ENCODE measurements at regions of chr16 and their contacts with region 1.

Region 1: DNA sequence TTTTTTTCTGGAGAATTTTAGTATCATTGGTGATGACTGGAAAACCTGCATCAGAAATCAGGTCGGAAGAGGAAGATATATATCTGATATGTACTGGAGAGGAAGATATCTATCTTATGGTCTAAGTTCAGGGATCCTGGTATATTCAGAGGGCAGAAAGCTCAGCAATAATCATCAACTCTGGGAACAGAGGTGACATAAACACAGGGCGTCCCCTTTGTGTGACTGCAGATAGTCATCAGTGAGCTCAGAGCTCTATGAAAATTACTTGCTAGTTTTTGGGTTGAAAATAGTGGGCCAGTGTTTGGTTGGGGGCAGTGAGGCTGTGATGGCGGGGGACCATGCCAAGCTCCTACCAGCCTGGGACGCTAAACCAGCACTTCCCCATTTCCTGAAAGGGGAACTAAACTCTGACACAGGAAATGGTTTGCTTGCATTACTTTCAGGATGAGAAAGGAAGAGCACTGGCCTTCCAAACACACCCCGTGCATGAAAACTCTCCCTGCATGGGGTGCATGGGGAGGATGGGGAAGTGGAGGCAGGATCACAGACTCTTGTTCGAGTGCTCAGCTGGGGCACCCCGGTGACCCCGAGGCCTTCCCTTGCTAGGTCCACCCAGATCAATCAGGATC is 15.8 kb downstream of the NOD2 start:
- DNase-seq: no peak
- H3K4me3 Mint-ChIP-seq: peak overlapping the region; percentile 11
- H3K27ac Mint-ChIP-seq: peak overlapping the region; percentile 64
- H3K4me1 Mint-ChIP-seq: peaks cover 54% of the 10 kb centered on the region
- H3K27me3 Mint-ChIP-seq: no peaks in the 10 kb centered on the region

Region 2: DNA sequence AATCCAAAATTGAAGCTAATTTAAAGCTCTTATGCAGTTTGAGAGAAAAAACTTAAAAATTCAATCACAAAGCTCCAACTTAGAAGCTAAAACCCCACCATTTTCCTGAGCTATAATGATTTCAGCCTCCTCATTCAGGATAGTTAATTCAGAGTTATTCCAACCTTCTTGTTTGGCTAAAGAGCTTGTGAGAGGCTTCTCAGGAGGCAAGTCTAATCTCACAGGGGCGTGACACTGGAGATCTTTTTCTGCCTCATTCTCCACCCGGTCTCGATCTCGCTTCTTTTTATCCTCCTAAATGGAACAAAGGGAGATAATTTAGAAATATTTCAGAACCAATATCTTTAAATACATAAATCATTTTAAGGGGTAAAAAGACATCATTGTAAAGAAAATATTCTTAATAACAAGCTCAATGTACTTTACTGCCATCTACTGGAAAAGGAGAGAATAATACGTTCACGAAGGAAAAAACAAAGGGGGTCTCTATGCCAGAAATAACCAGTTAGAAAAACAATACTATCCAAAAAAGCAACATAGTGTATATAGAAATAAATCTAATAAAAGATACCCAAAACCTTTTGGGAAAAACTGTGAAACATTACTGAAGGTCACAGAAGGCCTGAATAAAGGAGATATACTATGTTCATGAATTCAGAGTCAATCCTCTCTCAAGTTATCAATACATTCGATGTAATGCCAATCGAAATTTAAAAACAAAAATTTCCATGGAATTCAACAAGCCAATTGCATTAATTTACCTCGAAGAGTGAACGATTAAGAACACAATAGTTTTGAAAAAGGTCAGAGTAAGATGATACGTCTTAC is 354.3 kb before region 1 on chr16:
- intact Hi-C with region 1: no loop called
- DNase-seq: no peak
- H3K4me3 Mint-ChIP-seq: no peak overlapping the region
- H3K27ac Mint-ChIP-seq: peak overlapping the region; percentile 47
- H3K4me1 Mint-ChIP-seq: peaks cover 17% of the 10 kb centered on the region
- H3K27me3 Mint-ChIP-seq: no peaks in the 10 kb centered on the region

Region 3: GRCh38 chr16:50683689-50684374 is 25.3 kb before region 1 on chr16:
- intact Hi-C with region 1: loop called (anchors 2 kb)
- DNase-seq: peak; percentile 61
- H3K4me3 Mint-ChIP-seq: peak overlapping the region; percentile 45
- H3K27ac Mint-ChIP-seq: peak overlapping the region; percentile 86
- H3K4me1 Mint-ChIP-seq: peaks cover 58% of the 10 kb centered on the region
- H3K27me3 Mint-ChIP-seq: no peaks in the 10 kb centered on the region

Region 4: GRCh38 chr16:50697851-50698767 is 11.1 kb before region 1 on chr16:
- intact Hi-C with region 1: loop called (anchors 1 kb)
- DNase-seq: no peak
- H3K4me3 Mint-ChIP-seq: peak overlapping the region; percentile 70
- H3K27ac Mint-ChIP-seq: peak overlapping the region; percentile 88
- H3K4me1 Mint-ChIP-seq: peaks cover 63% of the 10 kb centered on the region
- H3K27me3 Mint-ChIP-seq: no peaks in the 10 kb centered on the region

Region 5: DNA sequence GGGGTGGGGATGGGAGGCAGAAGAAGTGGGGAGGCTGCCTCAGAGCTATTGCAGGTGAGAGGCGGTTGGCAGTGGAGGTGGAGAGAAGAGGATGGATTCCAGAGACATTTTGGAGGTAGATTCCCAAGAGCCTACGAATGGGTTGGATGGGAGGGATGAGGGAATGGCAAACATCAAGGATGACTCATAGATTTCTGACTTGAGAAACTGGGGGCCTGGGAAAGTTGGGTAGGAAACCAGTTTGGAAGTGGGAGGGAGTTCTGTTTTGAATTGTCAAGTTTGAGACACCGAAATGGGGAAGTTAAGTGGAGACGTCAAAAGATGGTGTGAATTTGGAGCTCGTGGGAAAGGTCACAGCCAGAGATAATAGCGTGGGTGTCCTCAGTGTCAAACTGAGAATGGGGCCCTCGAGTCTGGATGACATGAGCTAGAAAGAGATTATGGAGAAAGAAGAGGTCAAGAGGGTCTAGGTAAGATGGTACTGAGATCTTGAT is 26.5 kb after region 1 on chr16:
- intact Hi-C with region 1: loop called (anchors 1 kb)
- DNase-seq: no peak
- H3K4me3 Mint-ChIP-seq: no peak overlapping the region
- H3K27ac Mint-ChIP-seq: peak overlapping the region; percentile 50
- H3K4me1 Mint-ChIP-seq: peaks cover 52% of the 10 kb centered on the region
- H3K27me3 Mint-ChIP-seq: no peaks in the 10 kb centered on the region

Region 6: GRCh38 chr16:51321251-51321650 is 612.1 kb after region 1 on chr16:
- intact Hi-C with region 1: no loop called
- DNase-seq: no peak
- H3K4me3 Mint-ChIP-seq: no peak overlapping the region
- H3K27ac Mint-ChIP-seq: no peak overlapping the region
- H3K4me1 Mint-ChIP-seq: no peaks in the 10 kb centered on the region
- H3K27me3 Mint-ChIP-seq: no peaks in the 10 kb centered on the region

Measured in activated T-helper 2 cell treated with anti-CD3 and anti-CD28 coated beads, Interferon-gamma antibody, Interleukin-2, Interleukin-4, amounts not matched to agents 10 μg/mL and 5 μg/mL and 100 μg/mL, durations not matched to agents 14 hours and 24 hours and 36 hours (primary cell).